WTC11 (cell line): ENCODE measurements at regions of chr7 and their contacts with region 1.

Region 1: DNA sequence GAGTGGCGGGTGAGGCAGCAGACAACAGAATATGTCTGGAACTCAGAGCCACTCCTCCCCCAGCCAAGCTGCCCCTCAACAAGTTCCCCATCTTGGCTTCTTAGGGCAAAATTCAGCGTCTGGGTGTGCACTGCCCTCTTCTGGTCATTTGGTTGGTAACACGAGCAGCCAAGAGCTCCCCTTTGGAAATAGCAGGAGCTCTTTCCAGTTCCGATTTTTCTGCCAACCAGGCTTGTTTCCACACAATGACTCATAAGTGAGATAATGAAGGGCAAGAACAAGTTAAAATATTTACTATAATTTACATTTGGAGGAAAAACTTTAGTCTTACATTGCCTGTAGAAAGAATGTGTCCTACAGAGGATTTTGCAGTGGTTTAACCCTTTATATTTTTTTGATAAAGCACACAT is 70.5 kb downstream of the ADCYAP1R1 start:
- DNase-seq: peak; percentile 78
- ATAC-seq: peak; percentile 91
- H3K4me3 Mint-ChIP-seq: no peak overlapping the region
- H3K27ac Mint-ChIP-seq: peak overlapping the region; percentile 34; the same call in 1 of the 2 replicates
- H3K4me1 Mint-ChIP-seq: peaks cover 8% of the 10 kb centered on the region
- H3K27me3 Mint-ChIP-seq: peaks cover 7% of the 10 kb centered on the region; the same call in 1 of the 2 replicates
- CTCF ChIP-seq: peak; percentile 60

Region 2: GRCh38 chr7:30931161-30931928 is 191.3 kb before region 1 on chr7:
- CTCF ChIA-PET with region 1: interaction called, 13 read pairs
- POLR2A ChIA-PET with region 1: no interaction called
- DNase-seq: no peak
- ATAC-seq: no peak; the same call in 1 of the 2 replicates
- H3K4me3 Mint-ChIP-seq: no peak overlapping the region
- H3K27ac Mint-ChIP-seq: no peak overlapping the region
- H3K4me1 Mint-ChIP-seq: 0 out of 2 replicates have a peak, but pooled peaks cover 4% of the 10 kb centered on the region
- H3K27me3 Mint-ChIP-seq: peaks cover 9% of the 10 kb centered on the region
- CTCF ChIP-seq: no peak

Region 3: GRCh38 chr7:30996256-30996655 is 126.4 kb before region 1 on chr7:
- CTCF ChIA-PET with region 1: interaction called, 882 read pairs
- POLR2A ChIA-PET with region 1: no interaction called
- DNase-seq: no peak
- ATAC-seq: no peak
- H3K4me3 Mint-ChIP-seq: no peak overlapping the region
- H3K27ac Mint-ChIP-seq: no peak overlapping the region; the same call in 1 of the 2 replicates
- H3K4me1 Mint-ChIP-seq: peaks cover 6% of the 10 kb centered on the region
- H3K27me3 Mint-ChIP-seq: no peaks in the 10 kb centered on the region
- CTCF ChIP-seq: no peak

Region 4: DNA sequence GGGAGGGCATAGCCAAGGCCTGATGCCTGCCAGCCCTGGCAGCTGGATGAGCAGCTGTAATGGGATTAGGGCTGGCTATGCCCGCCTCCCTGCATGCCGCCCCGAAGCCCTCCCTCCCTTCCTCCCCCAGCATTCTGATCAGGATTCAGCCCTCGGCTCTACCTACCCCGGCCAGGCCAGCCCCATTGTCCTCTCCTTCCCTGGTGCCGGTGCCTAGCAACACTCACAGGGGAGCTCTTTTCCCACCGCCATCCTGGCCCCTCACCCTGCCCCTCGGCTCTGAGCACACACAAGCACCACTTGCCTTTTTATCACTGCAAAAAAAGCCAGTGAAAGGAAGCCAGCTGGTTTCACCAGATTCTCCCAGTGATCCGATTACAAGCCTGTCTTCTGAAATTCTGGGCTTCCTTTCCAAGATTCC is 79.6 kb before region 1 on chr7:
- CTCF ChIA-PET with region 1: interaction called, 89 read pairs
- POLR2A ChIA-PET with region 1: interaction called, 3 read pairs
- DNase-seq: peak; percentile 48
- ATAC-seq: peak; percentile 97
- H3K4me3 Mint-ChIP-seq: no peak overlapping the region
- H3K27ac Mint-ChIP-seq: no peak overlapping the region; the same call in 1 of the 2 replicates
- H3K4me1 Mint-ChIP-seq: peaks cover 25% of the 10 kb centered on the region
- H3K27me3 Mint-ChIP-seq: peaks cover 14% of the 10 kb centered on the region; the same call in 1 of the 2 replicates
- CTCF ChIP-seq: no peak

Region 5: DNA sequence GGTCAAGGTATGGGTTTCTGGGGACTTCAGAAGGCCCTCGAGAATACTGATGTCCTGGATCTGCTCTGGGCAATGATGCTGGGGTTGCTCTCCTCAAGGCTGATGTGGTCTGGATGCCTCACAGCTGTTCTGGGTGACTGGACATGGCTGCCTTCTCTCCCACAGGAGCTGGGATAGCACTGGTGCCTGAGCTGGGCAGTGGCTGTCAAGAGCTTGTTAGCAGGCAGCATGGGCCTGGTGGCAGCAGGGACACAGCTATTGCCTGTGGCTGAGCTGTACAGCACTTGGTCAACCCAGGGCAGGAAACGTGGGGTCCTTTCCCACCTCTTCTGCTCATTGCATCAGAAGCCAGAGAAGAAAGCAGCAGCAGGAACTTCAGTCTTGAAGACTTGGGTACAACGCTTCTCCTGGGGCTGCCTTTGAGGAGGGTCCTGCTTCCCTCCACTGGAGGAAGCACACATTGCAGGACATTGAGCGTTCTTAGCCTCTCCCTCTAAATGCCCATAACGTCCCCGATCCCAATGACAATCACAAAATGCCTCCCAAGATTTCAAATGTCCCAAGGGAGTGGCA is 57.5 kb before region 1 on chr7:
- CTCF ChIA-PET with region 1: interaction called, 127 read pairs
- POLR2A ChIA-PET with region 1: no interaction called
- DNase-seq: no peak
- ATAC-seq: peak; percentile 62
- H3K4me3 Mint-ChIP-seq: no peak overlapping the region
- H3K27ac Mint-ChIP-seq: no peak overlapping the region
- H3K4me1 Mint-ChIP-seq: peaks cover 7% of the 10 kb centered on the region; the same call in 1 of the 2 replicates
- H3K27me3 Mint-ChIP-seq: no peaks in the 10 kb centered on the region
- CTCF ChIP-seq: no peak

Region 6: DNA sequence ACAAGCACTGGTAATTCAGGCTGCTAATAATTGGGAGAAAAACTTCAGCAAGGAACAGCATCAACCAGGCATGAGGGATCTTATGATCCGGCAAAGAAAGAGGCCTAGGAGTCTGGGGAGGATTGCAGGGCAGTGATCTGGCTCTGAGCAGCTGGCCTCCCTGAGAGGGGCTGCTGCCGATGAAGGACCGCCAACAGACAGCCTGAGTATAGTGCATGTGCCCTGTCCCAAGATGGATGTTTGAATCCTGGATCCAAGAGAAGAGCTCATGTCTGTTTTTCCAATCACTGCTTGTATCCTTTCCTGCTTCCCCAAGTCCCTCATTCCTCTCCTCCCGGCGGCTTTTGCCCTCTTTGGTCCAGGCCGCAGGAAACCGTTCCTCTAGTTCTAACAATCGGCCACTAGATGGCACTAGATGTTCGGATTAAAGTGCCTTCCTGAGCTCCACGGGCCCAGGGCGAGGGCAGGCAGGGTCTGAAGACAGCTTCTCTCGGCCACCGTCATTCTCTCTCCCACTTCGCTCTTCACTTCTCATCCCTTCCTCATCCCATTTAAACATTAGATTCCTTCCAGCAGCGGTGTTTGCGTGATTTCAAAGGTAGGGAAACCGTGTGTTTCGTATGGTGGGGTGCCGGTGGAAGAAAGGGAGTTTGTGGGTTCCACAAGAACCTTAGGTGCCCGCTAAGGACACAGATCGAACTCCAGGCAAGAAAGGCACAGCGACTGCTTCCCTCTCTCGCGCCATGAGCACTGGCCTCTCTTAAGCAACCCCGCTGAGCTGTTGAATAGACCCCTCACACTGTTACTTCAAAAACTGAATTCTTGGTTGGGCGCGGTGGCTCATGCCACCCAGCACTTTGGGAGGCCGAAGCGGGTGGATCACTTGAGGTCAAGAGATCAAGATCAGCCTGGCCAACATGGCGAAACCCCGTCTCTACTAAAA is 11.9 kb after region 1 on chr7:
- CTCF ChIA-PET with region 1: interaction called, 119 read pairs
- POLR2A ChIA-PET with region 1: no interaction called
- DNase-seq: peak; percentile 80
- ATAC-seq: peak; percentile 99
- H3K4me3 Mint-ChIP-seq: peak overlapping the region; percentile 9
- H3K27ac Mint-ChIP-seq: no peak overlapping the region
- H3K4me1 Mint-ChIP-seq: peaks cover 5% of the 10 kb centered on the region
- H3K27me3 Mint-ChIP-seq: peaks cover 7% of the 10 kb centered on the region
- CTCF ChIP-seq: peak; percentile 77

Region 7: GRCh38 chr7:31204071-31204470 is 81.4 kb after region 1 on chr7:
- CTCF ChIA-PET with region 1: no interaction called
- POLR2A ChIA-PET with region 1: no interaction called
- DNase-seq: no peak
- ATAC-seq: no peak
- H3K4me3 Mint-ChIP-seq: no peak overlapping the region
- H3K27ac Mint-ChIP-seq: no peak overlapping the region
- H3K4me1 Mint-ChIP-seq: no peaks in the 10 kb centered on the region
- H3K27me3 Mint-ChIP-seq: peaks cover 2% of the 10 kb centered on the region; the same call in 1 of the 2 replicates
- CTCF ChIP-seq: no peak